ENCODE measurements at regions of chr19 and their contacts with region 1.

Region 1: GRCh38 chr19:37077934-37078725 is at the start of gene ZNF420:
- DNase-seq: peak; percentile 85
- H3K4me3 Mint-ChIP-seq: peak within 1 kb of the TSS; percentile 93
- H3K27ac Mint-ChIP-seq: peak within 1 kb of the TSS; percentile 90
- H3K4me1 Mint-ChIP-seq: peaks cover 21% of the 10 kb centered on the region
- H3K27me3 Mint-ChIP-seq: no peaks in the 10 kb centered on the region
- total RNA-seq, gene ZNF420: 5.9 and 9.1 TPM in 2 replicates

Region 2: DNA sequence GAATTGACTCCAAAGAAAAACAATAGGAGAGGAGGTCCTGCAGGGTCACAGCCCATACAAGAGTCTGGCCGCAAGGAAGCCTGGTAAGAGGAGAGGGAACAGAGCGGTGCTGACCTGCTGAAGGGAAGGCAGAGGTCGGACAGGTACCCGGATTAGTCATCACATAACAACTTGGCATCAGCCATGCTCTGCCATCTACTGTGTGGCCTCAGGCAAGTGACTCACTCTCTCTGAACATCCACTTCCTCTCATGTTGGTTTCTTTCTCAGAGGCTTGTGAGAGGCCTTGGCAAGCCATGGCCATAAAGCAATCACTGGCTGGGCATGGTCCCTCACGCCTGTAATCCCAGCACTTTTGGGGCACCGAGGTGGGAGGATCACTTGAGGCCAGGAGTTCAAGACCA is 945.6 kb before region 1 on chr19:
- intact Hi-C with region 1: loop called (anchors 5 kb)
- DNase-seq: peak; percentile 17
- H3K4me3 Mint-ChIP-seq: peak overlapping the region; percentile 7
- H3K27ac Mint-ChIP-seq: peak overlapping the region; percentile 78
- H3K4me1 Mint-ChIP-seq: peaks cover 30% of the 10 kb centered on the region
- H3K27me3 Mint-ChIP-seq: peaks cover 1% of the 10 kb centered on the region

Region 3: GRCh38 chr19:36665832-36666231 is 412.3 kb before region 1 on chr19:
- intact Hi-C with region 1: loop called (anchors 5 kb)
- DNase-seq: no peak
- H3K4me3 Mint-ChIP-seq: peak overlapping the region; percentile 99
- H3K27ac Mint-ChIP-seq: peak overlapping the region; percentile 26
- H3K4me1 Mint-ChIP-seq: peaks cover 16% of the 10 kb centered on the region
- H3K27me3 Mint-ChIP-seq: no peaks in the 10 kb centered on the region

Region 4: DNA sequence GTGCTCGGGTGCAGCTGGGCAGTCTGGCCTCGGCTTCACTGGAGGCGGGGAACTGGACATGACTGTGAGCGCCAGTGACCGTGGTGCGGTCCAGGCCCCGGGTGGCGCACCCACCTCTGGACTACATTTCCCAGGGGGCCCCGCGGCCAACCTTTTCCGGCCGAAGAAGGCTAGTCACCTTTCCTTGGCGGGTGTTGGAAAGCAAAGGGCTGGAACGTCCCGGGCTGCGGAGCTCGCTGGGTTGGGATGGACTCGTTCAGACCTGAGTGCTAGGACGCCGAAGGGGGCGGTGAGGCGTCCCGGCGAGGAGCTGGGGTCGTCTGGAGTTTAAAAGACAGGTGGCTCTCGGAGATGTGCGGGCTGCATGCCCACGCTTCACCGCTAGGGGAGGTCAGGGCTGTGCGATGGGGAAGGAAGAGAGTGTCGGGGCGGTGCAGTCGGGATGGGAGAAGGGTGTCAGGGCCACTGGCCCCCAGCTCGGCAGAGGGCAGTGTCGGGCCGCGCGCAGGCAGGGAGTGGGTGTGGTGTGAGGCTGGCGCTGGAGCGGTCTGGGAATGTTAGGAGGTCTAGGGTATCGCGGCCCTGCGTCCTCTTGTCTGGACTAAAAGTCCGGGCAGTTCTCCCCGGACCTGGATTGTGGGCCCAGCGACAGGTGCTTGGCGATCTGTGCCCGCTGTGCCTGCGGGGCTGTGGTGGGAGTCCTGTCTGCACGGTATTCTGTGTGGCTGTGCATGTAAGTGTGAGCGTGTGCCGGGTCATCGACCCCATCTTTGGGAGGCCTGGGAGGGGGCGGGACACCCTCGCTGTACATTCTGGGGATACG is 104.9 kb before region 1 on chr19:
- intact Hi-C with region 1: loop called (anchors 1 kb)
- DNase-seq: peak; percentile 67
- H3K4me3 Mint-ChIP-seq: peak overlapping the region; percentile 98
- H3K27ac Mint-ChIP-seq: peak overlapping the region; percentile 87
- H3K4me1 Mint-ChIP-seq: peaks cover 12% of the 10 kb centered on the region
- H3K27me3 Mint-ChIP-seq: no peaks in the 10 kb centered on the region

Region 5: GRCh38 chr19:37217855-37218591 is 139.9 kb after region 1 on chr19 and contains the start of gene ZNF383:
- intact Hi-C with region 1: loop called (anchors 1 kb)
- DNase-seq: peak; percentile 78
- H3K4me3 Mint-ChIP-seq: peak within 1 kb of the TSS; percentile 96
- H3K27ac Mint-ChIP-seq: peak within 1 kb of the TSS; percentile 90
- H3K4me1 Mint-ChIP-seq: peaks cover 20% of the 10 kb centered on the region
- H3K27me3 Mint-ChIP-seq: no peaks in the 10 kb centered on the region
- total RNA-seq, gene ZNF383: 6.3 TPM in 2 replicates

Region 6: GRCh38 chr19:37594304-37594981 is 516.3 kb after region 1 on chr19 and contains the starts of genes ZNF540 and ZNF571:
- intact Hi-C with region 1: loop called (anchors 1 kb)
- DNase-seq: peak; percentile 81
- H3K4me3 Mint-ChIP-seq: peak within 1 kb of the TSS; percentile 88
- H3K27ac Mint-ChIP-seq: peak within 1 kb of the TSS; percentile 91
- H3K4me1 Mint-ChIP-seq: peaks cover 24% of the 10 kb centered on the region
- H3K27me3 Mint-ChIP-seq: no peaks in the 10 kb centered on the region
- total RNA-seq, gene ZNF540: 0.39 and 0.70 TPM in 2 replicates
- total RNA-seq, gene ZNF571: 0.64 and 1.4 TPM in 2 replicates

Measured in activated T-helper 1 cell treated with anti-CD3 and anti-CD28 coated beads, Interleukin-12 subunit alpha, Interleukin-12 subunit beta, Interleukin-2, Interleukin-4 antibody, amounts not matched to agents 30 ng/mL and 10 ng/mL and 1 ng/mL, durations not matched to agents 14 hours and 24 hours and 36 hours (primary cell).